ENCODE measurements at regions of chr1 and their contacts with region 1.

Region 1: DNA sequence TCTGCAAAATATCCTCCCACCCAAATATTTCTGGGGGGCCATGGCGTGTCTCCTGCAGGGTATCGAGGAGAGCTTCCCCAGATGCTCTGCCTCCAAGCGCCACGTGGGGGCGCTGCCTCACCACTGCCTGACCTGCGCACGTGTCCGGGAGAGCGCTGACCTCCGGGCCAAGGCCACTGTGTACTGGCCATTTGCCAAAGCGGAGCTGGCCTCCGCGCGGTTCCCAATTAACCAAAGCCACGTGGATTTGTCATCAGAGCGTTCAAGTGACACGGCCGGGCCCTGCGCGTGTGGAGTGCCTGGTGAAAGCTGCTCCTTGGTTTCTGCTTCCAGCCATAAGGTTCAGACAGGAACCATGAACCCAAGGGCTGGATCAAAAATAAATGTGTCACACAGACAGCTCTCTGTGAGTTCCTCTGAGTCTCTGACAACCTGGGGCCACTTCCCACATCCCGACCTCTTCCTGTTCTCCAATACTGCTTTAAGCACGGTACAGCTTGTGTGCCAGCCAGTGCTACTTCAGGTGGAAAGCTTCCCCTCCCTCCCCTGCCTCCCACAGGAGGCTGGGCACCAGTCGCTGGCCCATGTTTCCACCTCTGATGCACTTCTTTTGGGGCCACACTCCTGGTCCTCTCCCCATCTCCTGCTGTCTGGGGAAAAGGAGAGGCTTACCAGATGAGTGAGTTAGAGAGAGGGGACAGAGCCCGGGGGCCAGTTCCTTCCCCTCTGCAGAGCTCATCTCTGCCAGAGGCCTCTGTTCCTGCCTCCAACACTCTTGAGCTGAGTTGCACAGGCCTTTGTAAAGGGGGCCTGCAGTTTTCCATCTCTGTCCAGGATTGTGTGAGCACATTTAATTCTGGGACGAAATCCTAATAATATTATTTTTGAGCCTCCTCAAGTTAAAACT is 26.1 kb downstream of the ZP4 start:
- DNase-seq: peak; percentile 38 to 63 (median 60)
- H3K4me3 ChIP-seq: peak overlapping the region; percentile 15 to 74 (median 54)
- H3K27ac ChIP-seq: no peak overlapping the region
- H3K4me1 ChIP-seq: peaks cover 0 to 10% (median 9%) of the 10 kb centered on the region in 4 experiments
- H3K27me3 ChIP-seq: no peaks in the 10 kb centered on the region

Region 2: GRCh38 chr1:237799762-237800474 is 64.7 kb before region 1 on chr1:
- CTCF ChIA-PET with region 1: no interaction called
- POLR2A ChIA-PET with region 1: no interaction called
- DNase-seq: peak; percentile 22 to 40 (median 26)
- H3K4me3 ChIP-seq: no peak overlapping the region
- H3K27ac ChIP-seq: no peak overlapping the region
- H3K4me1 ChIP-seq: no peaks in the 10 kb centered on the region
- H3K27me3 ChIP-seq: no peaks in the 10 kb centered on the region

Region 3: DNA sequence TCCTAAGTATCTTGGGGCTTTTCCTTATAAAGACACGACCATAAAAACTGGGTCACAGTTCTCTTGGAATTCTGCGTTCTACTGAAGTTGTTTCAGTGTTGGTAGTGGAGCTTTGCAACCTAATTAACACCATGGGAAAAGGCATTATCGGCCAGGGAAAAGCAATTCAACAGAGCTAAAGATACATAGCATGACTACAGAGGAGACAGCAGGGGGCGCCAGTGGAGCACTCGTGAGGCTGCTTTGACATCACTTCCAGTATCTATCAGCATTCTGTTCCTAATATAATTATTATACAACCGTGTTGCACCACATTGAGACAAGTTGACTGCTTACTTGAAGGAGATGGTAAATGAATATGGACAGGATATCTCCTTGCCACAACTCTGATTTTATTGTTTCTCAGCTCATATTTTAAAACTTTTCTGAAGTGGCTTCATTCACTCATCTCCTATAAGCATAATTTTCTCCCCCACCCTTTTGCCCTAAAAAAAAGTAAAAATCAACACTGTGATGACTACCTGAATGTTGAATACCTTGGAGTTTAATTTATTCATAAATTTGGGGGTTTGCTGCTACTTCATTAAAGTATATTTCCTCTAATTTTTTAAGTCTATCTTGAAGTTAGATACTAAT is 13.3 kb before region 1 on chr1:
- CTCF ChIA-PET with region 1: interaction called, 53 read pairs
- POLR2A ChIA-PET with region 1: no interaction called
- DNase-seq: peak; percentile 59 to 69 (median 67)
- H3K4me3 ChIP-seq: no peak overlapping the region
- H3K27ac ChIP-seq: no peak overlapping the region
- H3K4me1 ChIP-seq: no peaks in the 10 kb centered on the region
- H3K27me3 ChIP-seq: no peaks in the 10 kb centered on the region

Region 4: GRCh38 chr1:237877631-237878030 is 13.0 kb after region 1 on chr1:
- CTCF ChIA-PET with region 1: interaction called, 11 read pairs
- POLR2A ChIA-PET with region 1: no interaction called
- DNase-seq: no peak
- H3K4me3 ChIP-seq: no peak overlapping the region
- H3K27ac ChIP-seq: no peak overlapping the region
- H3K4me1 ChIP-seq: no peaks in the 10 kb centered on the region
- H3K27me3 ChIP-seq: no peaks in the 10 kb centered on the region

Region 5: GRCh38 chr1:238951809-238952208 is 1087.2 kb after region 1 on chr1:
- CTCF ChIA-PET with region 1: interaction called, 39 read pairs
- POLR2A ChIA-PET with region 1: no interaction called
- DNase-seq: peak; percentile 60 to 65 (median 63)
- H3K4me3 ChIP-seq: no peak overlapping the region
- H3K27ac ChIP-seq: no peak overlapping the region
- H3K4me1 ChIP-seq: peaks cover 0 to 10% (median 0%) of the 10 kb centered on the region in 4 experiments
- H3K27me3 ChIP-seq: no peaks in the 10 kb centered on the region